ENCODE measurements at regions of chr22 and their contacts with region 1.

Region 1: GRCh38 chr22:41367039-41367679 is 14.6 kb upstream of the TEF start:
- DNase-seq: peak; percentile 96
- H3K4me3 ChIP-seq: no peak overlapping the region
- H3K27ac ChIP-seq: no peak overlapping the region
- H3K4me1 ChIP-seq: peaks cover 7% of the 10 kb centered on the region
- H3K27me3 ChIP-seq: no peaks in the 10 kb centered on the region
- CTCF ChIP-seq: peak; percentile 30 to 66
- POLR2A ChIP-seq: no peak

Region 2: GRCh38 chr22:41197038-41197972 is 169.9 kb before region 1 on chr22:
- CTCF ChIA-PET with region 1: no interaction called
- POLR2A ChIA-PET with region 1: no interaction called
- dilution Hi-C with region 1: no loop called
- intact Hi-C with region 1: loop called (anchors 10 kb)
- DNase-seq: peak; percentile 75
- H3K4me3 ChIP-seq: peak overlapping the region; percentile 22 to 65 (median 31)
- H3K27ac ChIP-seq: no peak overlapping the region
- H3K4me1 ChIP-seq: peaks cover 5% of the 10 kb centered on the region
- H3K27me3 ChIP-seq: no peaks in the 10 kb centered on the region
- CTCF ChIP-seq: peak in 1 of 2 donors; percentile 10
- POLR2A ChIP-seq: no peak

Region 3: GRCh38 chr22:41285820-41286638 is 81.1 kb before region 1 on chr22 and contains the start of gene RANGAP1:
- CTCF ChIA-PET with region 1: interaction called, 5 read pairs
- POLR2A ChIA-PET with region 1: no interaction called
- dilution Hi-C with region 1: no loop called
- intact Hi-C with region 1: loop called (anchors 5 kb)
- DNase-seq: peak; percentile 99
- H3K4me3 ChIP-seq: peak within 1 kb of the TSS; percentile 51 to 88 (median 55)
- H3K27ac ChIP-seq: peak within 1 kb of the TSS; percentile 71
- H3K4me1 ChIP-seq: peaks cover 57% of the 10 kb centered on the region
- H3K27me3 ChIP-seq: no peaks in the 10 kb centered on the region
- CTCF ChIP-seq: peak in 1 of 2 donors; percentile 28
- POLR2A ChIP-seq: peak; percentile 72
- total RNA-seq, gene RANGAP1: 154 and 169 TPM in 2 replicates

Region 4: DNA sequence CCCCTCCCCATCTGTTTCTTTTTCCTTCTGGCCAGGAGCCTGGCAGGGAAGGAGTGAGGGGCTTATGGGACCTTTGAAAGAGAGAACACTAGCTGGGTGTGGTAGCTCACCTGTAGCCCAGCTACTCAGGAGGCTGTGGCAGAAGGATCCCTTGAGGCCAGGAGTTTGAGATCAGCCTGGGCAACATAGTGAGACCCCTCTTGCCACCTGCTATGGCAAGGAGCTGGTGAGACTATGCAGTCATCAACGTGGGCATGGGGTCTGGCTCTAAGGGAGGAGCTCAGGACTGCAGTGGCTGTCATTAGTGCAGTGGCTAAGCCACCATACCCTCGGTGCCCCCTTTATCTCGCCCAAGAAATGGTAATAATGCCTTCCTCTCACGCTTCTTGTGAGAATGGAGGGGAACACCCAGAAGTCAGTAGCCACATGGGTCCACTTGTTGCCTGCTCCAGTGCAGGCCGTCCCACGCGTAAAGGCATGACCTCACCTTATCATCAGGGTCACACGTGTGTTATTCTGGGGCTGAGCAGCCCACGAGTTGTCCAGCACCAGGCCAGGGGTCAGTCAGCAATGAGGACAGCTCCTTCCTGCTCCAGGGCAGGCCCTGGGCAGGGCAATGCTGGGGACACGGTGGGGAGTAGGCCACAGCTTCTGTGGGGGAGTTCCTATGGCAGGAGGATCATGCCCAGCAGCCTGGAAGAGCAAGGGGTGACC is 13.1 kb before region 1 on chr22:
- CTCF ChIA-PET with region 1: interaction called, 3 read pairs
- POLR2A ChIA-PET with region 1: interaction called, 11 read pairs
- dilution Hi-C with region 1: no loop called
- intact Hi-C with region 1: no loop called
- DNase-seq: no peak
- H3K4me3 ChIP-seq: no peak overlapping the region
- H3K27ac ChIP-seq: no peak overlapping the region
- H3K4me1 ChIP-seq: no peaks in the 10 kb centered on the region
- H3K27me3 ChIP-seq: no peaks in the 10 kb centered on the region
- CTCF ChIP-seq: no peak
- POLR2A ChIP-seq: no peak

Measured in endothelial cell of umbilical vein (primary cell).